CD4-positive, alpha-beta T cell (primary cell): ENCODE measurements at regions of chr4 and their contacts with region 1.

Region 1: GRCh38 chr4:87848622-87849351 is 16.0 kb downstream of the MEPE start:
- DNase-seq: peak in 7 of 14 experiments; percentile 2 to 62 (median 27)
- ATAC-seq: peak; percentile 75
- H3K4me3 ChIP-seq: peak overlapping the region; percentile 24
- H3K4me3 Mint-ChIP-seq: peak overlapping the region; percentile 17
- H3K27ac ChIP-seq: no peak overlapping the region
- H3K27ac Mint-ChIP-seq: no peak overlapping the region
- H3K4me1 ChIP-seq: no peaks in the 10 kb centered on the region
- H3K4me1 Mint-ChIP-seq: peaks cover 18% of the 10 kb centered on the region
- H3K27me3 ChIP-seq: peaks cover 0 to 11% of the 10 kb centered on the region in 2 experiments
- H3K27me3 Mint-ChIP-seq: peaks cover 15% of the 10 kb centered on the region
- CTCF ChIP-seq: peak; percentile 66

Region 2: DNA sequence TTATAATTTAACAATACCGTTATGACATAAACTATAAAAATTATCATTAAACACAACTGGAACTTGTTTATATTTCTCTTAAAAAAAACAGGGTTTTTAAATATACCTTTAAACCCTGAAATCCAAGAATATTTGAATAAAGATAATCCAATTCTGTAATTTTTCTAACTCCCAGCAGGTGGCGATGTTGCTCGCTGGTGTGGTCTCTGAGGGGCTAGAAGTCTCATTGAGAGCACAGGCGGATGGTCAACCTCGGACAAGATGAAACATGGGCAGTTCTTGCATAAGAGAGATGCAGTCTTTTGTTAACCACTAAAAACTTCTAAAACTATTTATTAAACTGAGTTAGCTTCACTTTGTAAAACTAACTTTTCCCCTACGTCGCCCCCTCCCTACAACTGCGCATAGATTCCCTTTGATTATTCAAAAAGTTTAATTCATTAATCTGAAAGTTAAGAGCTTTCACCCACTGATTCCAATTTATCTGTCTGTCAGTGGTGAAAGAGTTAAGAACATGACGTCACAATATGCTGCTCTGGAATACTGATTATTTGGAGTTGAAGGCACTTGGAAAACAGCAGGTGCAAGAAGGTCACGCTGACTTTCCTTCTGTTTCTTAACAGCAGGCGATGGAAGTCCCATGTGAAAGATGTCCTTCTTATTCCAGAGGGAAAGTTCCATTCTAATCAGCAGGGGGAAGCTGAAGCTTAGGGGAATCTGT is 169.2 kb before region 1 on chr4:
- CTCF ChIA-PET with region 1: no interaction called
- POLR2A ChIA-PET with region 1: no interaction called
- intact Hi-C with region 1: loop called in 1 of 2 experiments (anchors 5 kb)
- DNase-seq: peak in 8 of 14 experiments; percentile 2 to 57 (median 16)
- ATAC-seq: no peak
- H3K4me3 ChIP-seq: no peak overlapping the region
- H3K4me3 Mint-ChIP-seq: no peak overlapping the region
- H3K27ac ChIP-seq: no peak overlapping the region
- H3K27ac Mint-ChIP-seq: no peak overlapping the region
- H3K4me1 ChIP-seq: no peaks in the 10 kb centered on the region
- H3K4me1 Mint-ChIP-seq: no peaks in the 10 kb centered on the region
- H3K27me3 ChIP-seq: no peaks in the 10 kb centered on the region
- H3K27me3 Mint-ChIP-seq: peaks cover 10% of the 10 kb centered on the region
- CTCF ChIP-seq: peak; percentile 69

Region 3: GRCh38 chr4:88297725-88298454 is 449.1 kb after region 1 on chr4:
- CTCF ChIA-PET with region 1: no interaction called
- POLR2A ChIA-PET with region 1: no interaction called
- intact Hi-C with region 1: no loop called
- DNase-seq: no peak
- ATAC-seq: no peak
- H3K4me3 ChIP-seq: no peak overlapping the region
- H3K4me3 Mint-ChIP-seq: no peak overlapping the region
- H3K27ac ChIP-seq: no peak overlapping the region
- H3K27ac Mint-ChIP-seq: no peak overlapping the region
- H3K4me1 ChIP-seq: no peaks in the 10 kb centered on the region
- H3K4me1 Mint-ChIP-seq: no peaks in the 10 kb centered on the region
- H3K27me3 ChIP-seq: no peaks in the 10 kb centered on the region
- H3K27me3 Mint-ChIP-seq: no peaks in the 10 kb centered on the region
- CTCF ChIP-seq: no peak

Region 4: GRCh38 chr4:88341227-88342192 is 492.7 kb after region 1 on chr4:
- CTCF ChIA-PET with region 1: no interaction called
- POLR2A ChIA-PET with region 1: no interaction called
- intact Hi-C with region 1: no loop called
- DNase-seq: no peak
- ATAC-seq: no peak
- H3K4me3 ChIP-seq: no peak overlapping the region
- H3K4me3 Mint-ChIP-seq: no peak overlapping the region
- H3K27ac ChIP-seq: no peak overlapping the region
- H3K27ac Mint-ChIP-seq: no peak overlapping the region
- H3K4me1 ChIP-seq: no peaks in the 10 kb centered on the region
- H3K4me1 Mint-ChIP-seq: no peaks in the 10 kb centered on the region
- H3K27me3 ChIP-seq: no peaks in the 10 kb centered on the region
- H3K27me3 Mint-ChIP-seq: no peaks in the 10 kb centered on the region
- CTCF ChIP-seq: no peak

Region 5: GRCh38 chr4:88369936-88370335 is 521.1 kb after region 1 on chr4:
- CTCF ChIA-PET with region 1: no interaction called
- POLR2A ChIA-PET with region 1: no interaction called
- intact Hi-C with region 1: no loop called
- DNase-seq: no peak
- ATAC-seq: no peak
- H3K4me3 ChIP-seq: no peak overlapping the region
- H3K4me3 Mint-ChIP-seq: no peak overlapping the region
- H3K27ac ChIP-seq: no peak overlapping the region
- H3K27ac Mint-ChIP-seq: no peak overlapping the region
- H3K4me1 ChIP-seq: no peaks in the 10 kb centered on the region
- H3K4me1 Mint-ChIP-seq: no peaks in the 10 kb centered on the region
- H3K27me3 ChIP-seq: no peaks in the 10 kb centered on the region
- H3K27me3 Mint-ChIP-seq: no peaks in the 10 kb centered on the region
- CTCF ChIP-seq: no peak

Region 6: GRCh38 chr4:89100853-89101252 is 1252.1 kb after region 1 on chr4:
- CTCF ChIA-PET with region 1: no interaction called
- POLR2A ChIA-PET with region 1: no interaction called
- intact Hi-C with region 1: no loop called
- DNase-seq: no peak
- ATAC-seq: no peak
- H3K4me3 ChIP-seq: no peak overlapping the region
- H3K4me3 Mint-ChIP-seq: no peak overlapping the region
- H3K27ac ChIP-seq: no peak overlapping the region
- H3K27ac Mint-ChIP-seq: no peak overlapping the region
- H3K4me1 ChIP-seq: no peaks in the 10 kb centered on the region
- H3K4me1 Mint-ChIP-seq: no peaks in the 10 kb centered on the region
- H3K27me3 ChIP-seq: peaks cover 0 to 2% of the 10 kb centered on the region in 2 experiments
- H3K27me3 Mint-ChIP-seq: peaks cover 7% of the 10 kb centered on the region
- CTCF ChIP-seq: no peak